ENCODE measurements at regions of chr20 and their contacts with region 1.

Region 1: GRCh38 chr20:62010551-62011402 is 54.9 kb downstream of the TAF4 start:
- DNase-seq: peak; percentile 59
- H3K4me3 ChIP-seq: no peak overlapping the region
- H3K27ac ChIP-seq: no peak overlapping the region
- H3K4me1 ChIP-seq: no peaks in the 10 kb centered on the region
- H3K27me3 ChIP-seq: no peaks in the 10 kb centered on the region
- CTCF ChIP-seq: peak; percentile 46 to 58
- POLR2A ChIP-seq: no peak

Region 2: DNA sequence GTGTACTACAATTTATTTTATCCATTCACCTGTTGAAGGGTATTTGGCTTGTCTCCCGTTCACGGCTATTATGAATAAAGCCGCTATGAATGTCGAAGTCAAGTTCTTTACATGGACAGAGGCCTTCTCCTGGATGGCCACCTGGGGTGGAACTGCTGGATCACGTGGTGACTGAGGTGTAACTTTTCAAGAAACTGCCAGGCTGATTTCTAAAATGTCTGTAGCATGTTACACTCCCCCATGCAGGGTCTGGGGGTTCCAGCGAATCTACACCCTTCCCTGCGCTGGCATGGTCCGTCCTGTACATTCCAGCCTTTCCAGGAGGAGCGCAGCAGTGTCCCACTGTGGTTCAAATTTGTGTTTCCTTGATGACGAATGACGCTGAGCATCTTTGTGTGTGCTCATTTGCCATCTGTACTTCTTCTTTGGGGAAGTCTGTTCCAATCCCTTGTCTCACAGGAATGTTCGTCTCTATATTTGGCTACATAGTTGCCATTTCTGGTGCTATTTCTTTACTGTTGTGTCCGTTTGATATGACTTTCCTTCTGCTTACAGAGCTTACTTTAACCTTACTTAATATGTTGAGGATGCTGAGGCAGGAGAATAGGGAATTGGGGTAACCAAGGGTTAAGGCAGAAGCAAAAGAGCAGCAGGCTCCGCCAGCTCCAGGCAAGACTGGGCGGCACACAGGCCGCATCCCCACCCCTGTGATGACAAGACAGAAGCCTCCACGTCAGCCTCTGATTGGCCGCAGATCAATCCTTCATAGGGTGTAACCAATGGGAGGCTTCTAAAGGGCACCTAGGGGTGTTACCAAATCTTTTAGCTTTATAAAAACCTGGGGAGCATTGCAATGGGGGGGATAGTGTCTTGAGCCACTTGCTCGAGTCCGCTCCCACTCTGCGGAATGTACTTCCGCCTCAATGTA is 51.7 kb before region 1 on chr20:
- CTCF ChIA-PET with region 1: no interaction called
- POLR2A ChIA-PET with region 1: no interaction called
- dilution Hi-C with region 1: no loop called
- intact Hi-C with region 1: no loop called
- DNase-seq: no peak
- H3K4me3 ChIP-seq: no peak overlapping the region
- H3K27ac ChIP-seq: no peak overlapping the region
- H3K4me1 ChIP-seq: no peaks in the 10 kb centered on the region
- H3K27me3 ChIP-seq: no peaks in the 10 kb centered on the region
- CTCF ChIP-seq: no peak
- POLR2A ChIP-seq: no peak

Region 3: GRCh38 chr20:62025832-62026563 is 15.2 kb after region 1 on chr20:
- CTCF ChIA-PET with region 1: interaction called, 22 read pairs
- POLR2A ChIA-PET with region 1: no interaction called
- dilution Hi-C with region 1: no loop called
- intact Hi-C with region 1: no loop called
- DNase-seq: peak; percentile 78
- H3K4me3 ChIP-seq: no peak overlapping the region
- H3K27ac ChIP-seq: no peak overlapping the region
- H3K4me1 ChIP-seq: peaks cover 10% of the 10 kb centered on the region
- H3K27me3 ChIP-seq: no peaks in the 10 kb centered on the region
- CTCF ChIP-seq: peak; percentile 65 to 85
- POLR2A ChIP-seq: no peak

Region 4: DNA sequence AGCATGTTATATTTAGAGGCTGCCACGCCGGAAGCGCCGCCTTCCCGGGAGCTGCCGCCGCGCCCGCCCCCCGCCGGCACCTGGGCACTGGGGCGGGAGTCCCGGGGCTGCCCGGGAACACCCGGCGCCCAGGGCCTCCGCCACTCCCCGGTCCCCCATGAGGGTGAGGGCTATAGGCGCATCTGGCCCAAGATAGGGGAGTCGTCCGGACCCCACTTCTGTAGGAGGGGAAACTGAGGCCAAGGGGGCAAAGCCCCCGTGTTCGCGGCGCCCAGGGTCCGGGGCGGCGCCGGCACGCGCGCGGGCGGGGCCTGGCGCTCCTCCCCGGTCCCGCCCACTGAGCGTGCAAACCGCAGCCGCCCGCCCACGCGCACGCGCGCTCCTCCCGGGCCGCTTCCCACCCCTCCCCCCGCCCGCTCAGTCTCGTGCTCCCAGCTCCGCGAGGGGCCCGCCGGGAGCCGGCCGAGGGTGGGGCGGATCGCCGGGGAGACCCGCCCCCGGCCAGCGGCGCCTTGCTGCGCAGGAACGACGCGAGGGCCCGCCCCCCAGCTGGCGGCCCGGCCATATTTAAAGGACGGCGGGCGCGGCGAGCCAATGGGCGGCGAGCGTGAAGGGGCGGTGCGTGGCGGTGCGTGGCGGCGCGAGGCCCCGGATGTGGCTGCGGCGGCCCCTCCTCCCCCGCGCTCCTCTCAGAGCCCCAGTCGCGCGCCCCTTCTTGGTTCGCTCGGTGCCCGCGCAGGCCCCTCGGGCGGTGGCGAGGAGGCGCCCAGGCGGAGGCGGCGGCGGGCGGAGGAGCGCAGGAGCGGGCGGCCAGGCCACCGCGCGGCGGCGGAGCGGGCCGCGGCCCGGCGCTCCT is 111.2 kb after region 1 on chr20 and contains the start of gene LSM14B:
- CTCF ChIA-PET with region 1: interaction called, 22 read pairs
- POLR2A ChIA-PET with region 1: no interaction called
- dilution Hi-C with region 1: no loop called
- intact Hi-C with region 1: loop called (anchors 5 kb)
- DNase-seq: peak; percentile 98
- H3K4me3 ChIP-seq: peak within 1 kb of the TSS; percentile 68 to 76 (median 75)
- H3K27ac ChIP-seq: peak within 1 kb of the TSS; percentile 57
- H3K4me1 ChIP-seq: peaks cover 11% of the 10 kb centered on the region
- H3K27me3 ChIP-seq: peaks cover 9 to 15% of the 10 kb centered on the region in 2 experiments
- CTCF ChIP-seq: no peak
- POLR2A ChIP-seq: peak; percentile 24
- total RNA-seq, gene LSM14B: 31.1 and 34.0 TPM in 2 replicates

Region 5: GRCh38 chr20:62143118-62143973 is 132.6 kb after region 1 on chr20 and contains the starts of genes PSMA7 and SS18L1:
- CTCF ChIA-PET with region 1: interaction called, 75 read pairs
- POLR2A ChIA-PET with region 1: no interaction called
- dilution Hi-C with region 1: no loop called
- intact Hi-C with region 1: loop called (anchors 1 kb)
- DNase-seq: peak; percentile 81
- H3K4me3 ChIP-seq: peak within 1 kb of the TSS; percentile 59 to 80 (median 69)
- H3K27ac ChIP-seq: peak within 1 kb of the TSS; percentile 88
- H3K4me1 ChIP-seq: peaks cover 8% of the 10 kb centered on the region
- H3K27me3 ChIP-seq: no peaks in the 10 kb centered on the region
- CTCF ChIP-seq: no peak
- POLR2A ChIP-seq: peak; percentile 70
- total RNA-seq, gene PSMA7: 389 and 393 TPM in 2 replicates
- total RNA-seq, gene SS18L1: 21.7 and 22.1 TPM in 2 replicates

Region 6: DNA sequence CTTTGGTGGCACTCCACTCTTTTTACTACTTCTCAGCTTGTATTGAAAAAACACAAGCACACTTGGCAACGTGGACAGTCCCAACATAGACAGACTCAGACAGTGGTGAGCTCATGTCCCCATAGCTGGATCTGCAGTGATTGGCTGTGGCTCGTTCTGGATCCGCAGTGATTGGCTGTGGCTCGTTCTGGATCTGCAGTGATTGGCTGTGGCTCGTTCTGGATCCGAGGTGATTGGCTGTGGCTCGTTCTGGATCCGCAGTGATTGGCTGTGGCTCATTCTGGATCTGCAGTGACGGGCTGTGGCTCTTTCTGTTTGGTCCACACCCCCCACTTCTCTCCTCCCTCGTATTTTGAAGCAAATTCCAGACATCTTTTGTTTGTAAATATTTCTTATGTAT is 255.6 kb after region 1 on chr20:
- CTCF ChIA-PET with region 1: interaction called, 5 read pairs
- POLR2A ChIA-PET with region 1: no interaction called
- dilution Hi-C with region 1: no loop called
- intact Hi-C with region 1: loop called (anchors 10 kb)
- DNase-seq: no peak
- H3K4me3 ChIP-seq: no peak overlapping the region
- H3K27ac ChIP-seq: no peak overlapping the region
- H3K4me1 ChIP-seq: no peaks in the 10 kb centered on the region
- H3K27me3 ChIP-seq: no peaks in the 10 kb centered on the region
- CTCF ChIP-seq: no peak
- POLR2A ChIP-seq: no peak

Measured in endothelial cell of umbilical vein (primary cell).